ENCODE measurements at regions of chr6 and their contacts with region 1.

Region 1: DNA sequence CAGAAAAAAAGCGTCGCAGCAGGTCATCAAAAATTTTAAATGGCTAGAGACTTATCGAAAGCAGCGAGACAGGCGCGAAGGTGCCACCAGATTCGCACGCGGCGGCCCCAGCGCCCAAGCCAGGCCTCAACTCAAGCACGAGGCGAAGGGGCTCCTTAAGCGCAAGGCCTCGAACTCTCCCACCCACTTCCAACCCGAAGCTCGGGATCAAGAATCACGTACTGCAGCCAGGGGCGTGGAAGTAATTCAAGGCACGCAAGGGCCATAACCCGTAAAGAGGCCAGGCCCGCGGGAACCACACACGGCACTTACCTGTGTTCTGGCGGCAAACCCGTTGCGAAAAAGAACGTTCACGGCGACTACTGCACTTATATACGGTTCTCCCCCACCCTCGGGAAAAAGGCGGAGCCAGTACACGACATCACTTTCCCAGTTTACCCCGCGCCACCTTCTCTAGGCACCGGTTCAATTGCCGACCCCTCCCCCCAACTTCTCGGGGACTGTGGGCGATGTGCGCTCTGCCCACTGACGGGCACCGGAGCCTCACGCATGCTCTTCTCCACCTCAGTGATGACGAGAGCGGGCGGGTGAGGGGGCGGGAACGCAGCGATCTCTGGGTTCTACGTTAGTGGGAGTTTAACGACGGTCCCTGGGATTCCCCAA is at the start of gene EEF1A1:
- DNase-seq: peak; percentile 98
- H3K4me3 Mint-ChIP-seq: peak within 1 kb of the TSS; percentile 98
- H3K27ac Mint-ChIP-seq: peak within 1 kb of the TSS; percentile 100
- H3K4me1 Mint-ChIP-seq: peaks cover 32% of the 10 kb centered on the region
- H3K27me3 Mint-ChIP-seq: no peaks in the 10 kb centered on the region
- total RNA-seq, gene EEF1A1: 11,266 and 11,402 TPM in 2 replicates

Region 2: DNA sequence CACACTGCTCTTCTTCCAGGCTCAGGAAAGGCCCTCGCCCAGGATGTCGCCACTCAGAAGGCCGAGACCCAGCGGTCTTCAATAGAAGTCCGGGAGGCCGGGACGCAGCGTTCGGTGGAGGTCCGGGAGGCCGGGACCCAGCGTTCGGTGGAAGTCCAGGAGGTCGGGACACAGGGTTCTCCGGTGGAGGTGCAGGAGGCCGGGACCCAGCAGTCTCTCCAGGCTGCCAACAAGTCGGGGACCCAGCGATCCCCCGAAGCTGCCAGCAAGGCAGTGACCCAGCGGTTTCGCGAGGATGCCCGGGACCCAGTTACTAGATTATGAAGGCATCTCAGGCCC is 157.3 kb before region 1 on chr6:
- intact Hi-C with region 1: no loop called
- DNase-seq: no peak
- H3K4me3 Mint-ChIP-seq: no peak overlapping the region
- H3K27ac Mint-ChIP-seq: no peak overlapping the region
- H3K4me1 Mint-ChIP-seq: no peaks in the 10 kb centered on the region
- H3K27me3 Mint-ChIP-seq: peaks cover 3% of the 10 kb centered on the region

Region 3: GRCh38 chr6:73461537-73462350 is 59.1 kb before region 1 on chr6 and contains the start of gene MTO1:
- intact Hi-C with region 1: loop called (anchors 2 kb)
- DNase-seq: peak; percentile 78
- H3K4me3 Mint-ChIP-seq: peak within 1 kb of the TSS; percentile 89
- H3K27ac Mint-ChIP-seq: peak within 1 kb of the TSS; percentile 94
- H3K4me1 Mint-ChIP-seq: peaks cover 41% of the 10 kb centered on the region
- H3K27me3 Mint-ChIP-seq: no peaks in the 10 kb centered on the region
- total RNA-seq, gene MTO1: 27.9 and 32.1 TPM in 2 replicates

Region 4: DNA sequence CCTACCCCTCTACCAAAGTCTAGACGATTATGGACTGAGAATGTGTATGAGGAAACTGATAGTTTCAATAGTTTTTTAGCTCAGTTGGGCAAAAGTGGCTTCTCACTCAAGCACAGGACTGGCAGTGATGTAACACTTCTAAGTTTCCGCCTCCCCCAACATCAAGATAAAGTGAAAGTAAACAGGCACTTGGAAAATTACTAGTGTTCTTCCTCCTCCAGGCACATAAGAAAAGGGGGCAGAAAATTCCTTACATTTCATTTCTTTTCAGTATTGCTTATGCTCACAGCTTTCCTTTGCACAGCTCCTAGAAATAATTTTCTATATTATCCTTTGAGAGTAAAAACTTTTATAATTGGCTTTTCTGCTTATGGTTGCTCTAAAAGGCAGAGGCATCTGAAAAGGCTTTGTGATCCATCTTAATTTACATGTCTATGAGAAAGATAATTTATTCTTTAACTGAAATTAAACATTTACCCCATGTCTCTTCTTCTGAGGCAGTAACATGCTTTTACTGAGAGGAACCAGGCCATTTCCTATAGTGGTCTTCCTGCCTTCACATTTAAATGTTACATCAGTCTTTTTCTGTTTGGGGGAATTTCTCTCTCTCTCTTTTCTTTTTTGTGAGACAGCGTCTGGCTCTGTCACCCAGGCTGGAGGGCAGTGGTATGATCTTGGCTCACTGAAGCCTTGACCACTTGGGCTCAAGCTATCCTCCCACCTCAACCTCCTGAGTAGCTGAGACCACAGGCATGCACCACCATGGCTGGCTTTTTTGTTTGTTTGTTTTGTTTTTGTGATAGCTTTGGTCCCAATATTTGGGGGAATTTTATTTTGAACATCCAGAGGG is 65.0 kb after region 1 on chr6:
- intact Hi-C with region 1: loop called (anchors 1 kb)
- DNase-seq: no peak
- H3K4me3 Mint-ChIP-seq: peak overlapping the region; percentile 75
- H3K27ac Mint-ChIP-seq: peak overlapping the region; percentile 92
- H3K4me1 Mint-ChIP-seq: peaks cover 23% of the 10 kb centered on the region
- H3K27me3 Mint-ChIP-seq: no peaks in the 10 kb centered on the region

Region 5: GRCh38 chr6:73695619-73696421 is 175.0 kb after region 1 on chr6 and contains the start of gene CD109:
- intact Hi-C with region 1: loop called (anchors 2 kb)
- DNase-seq: peak; percentile 71
- H3K4me3 Mint-ChIP-seq: peak within 1 kb of the TSS; percentile 86
- H3K27ac Mint-ChIP-seq: peak within 1 kb of the TSS; percentile 98
- H3K4me1 Mint-ChIP-seq: peaks cover 50% of the 10 kb centered on the region
- H3K27me3 Mint-ChIP-seq: no peaks in the 10 kb centered on the region
- total RNA-seq, gene CD109: 24.4 and 26.1 TPM in 2 replicates

Region 6: GRCh38 chr6:74041420-74041819 is 520.6 kb after region 1 on chr6:
- intact Hi-C with region 1: no loop called
- DNase-seq: no peak
- H3K4me3 Mint-ChIP-seq: no peak overlapping the region
- H3K27ac Mint-ChIP-seq: no peak overlapping the region
- H3K4me1 Mint-ChIP-seq: no peaks in the 10 kb centered on the region
- H3K27me3 Mint-ChIP-seq: no peaks in the 10 kb centered on the region

Region 7: GRCh38 chr6:74114428-74114827 is 593.6 kb after region 1 on chr6:
- intact Hi-C with region 1: no loop called
- DNase-seq: no peak
- H3K4me3 Mint-ChIP-seq: no peak overlapping the region
- H3K27ac Mint-ChIP-seq: no peak overlapping the region
- H3K4me1 Mint-ChIP-seq: peaks cover 3% of the 10 kb centered on the region
- H3K27me3 Mint-ChIP-seq: no peaks in the 10 kb centered on the region

Region 8: DNA sequence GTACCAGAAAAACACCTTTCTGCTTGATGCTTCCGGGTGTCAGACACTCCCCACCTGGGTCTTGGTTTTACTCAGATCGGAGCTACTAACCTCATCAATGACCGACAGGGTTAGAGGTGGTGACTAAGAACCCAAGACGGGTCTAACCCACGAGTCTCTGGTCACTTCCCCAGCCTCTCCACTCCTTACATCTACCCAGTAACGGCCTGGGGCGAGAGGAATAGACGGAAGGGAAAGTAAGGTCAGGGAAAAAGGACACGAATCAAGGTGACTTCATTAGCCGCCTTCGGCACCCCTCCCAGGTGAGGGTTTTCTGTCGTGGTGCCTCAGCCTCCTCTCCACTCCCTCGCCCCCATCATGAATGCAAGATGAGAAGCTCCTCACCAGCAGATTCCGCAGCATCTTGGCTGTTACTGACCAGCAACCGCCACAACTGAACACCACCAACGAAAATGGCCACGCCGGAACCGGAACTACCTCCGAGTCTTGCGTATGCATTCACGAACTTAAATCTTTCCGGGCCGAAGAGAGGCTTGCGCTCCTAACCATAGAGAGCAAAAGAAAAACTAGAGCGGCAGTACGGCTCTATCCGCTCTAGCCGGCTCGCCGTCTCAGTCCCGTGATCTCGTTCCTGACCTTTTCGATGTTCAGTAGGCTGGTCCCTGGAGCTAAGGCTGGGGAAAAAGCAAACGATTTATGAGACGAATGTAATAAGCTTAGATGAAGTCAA is 1722.7 kb after region 1 on chr6 and contains the start of gene COX7A2:
- intact Hi-C with region 1: loop called (anchors 5 kb)
- DNase-seq: peak; percentile 85
- H3K4me3 Mint-ChIP-seq: peak within 1 kb of the TSS; percentile 97
- H3K27ac Mint-ChIP-seq: peak within 1 kb of the TSS; percentile 97
- H3K4me1 Mint-ChIP-seq: peaks cover 18% of the 10 kb centered on the region
- H3K27me3 Mint-ChIP-seq: peaks cover 12% of the 10 kb centered on the region
- total RNA-seq, gene COX7A2: 529 and 542 TPM in 2 replicates